ENCODE measurements at regions of chr5 and their contacts with region 1.

Region 1: DNA sequence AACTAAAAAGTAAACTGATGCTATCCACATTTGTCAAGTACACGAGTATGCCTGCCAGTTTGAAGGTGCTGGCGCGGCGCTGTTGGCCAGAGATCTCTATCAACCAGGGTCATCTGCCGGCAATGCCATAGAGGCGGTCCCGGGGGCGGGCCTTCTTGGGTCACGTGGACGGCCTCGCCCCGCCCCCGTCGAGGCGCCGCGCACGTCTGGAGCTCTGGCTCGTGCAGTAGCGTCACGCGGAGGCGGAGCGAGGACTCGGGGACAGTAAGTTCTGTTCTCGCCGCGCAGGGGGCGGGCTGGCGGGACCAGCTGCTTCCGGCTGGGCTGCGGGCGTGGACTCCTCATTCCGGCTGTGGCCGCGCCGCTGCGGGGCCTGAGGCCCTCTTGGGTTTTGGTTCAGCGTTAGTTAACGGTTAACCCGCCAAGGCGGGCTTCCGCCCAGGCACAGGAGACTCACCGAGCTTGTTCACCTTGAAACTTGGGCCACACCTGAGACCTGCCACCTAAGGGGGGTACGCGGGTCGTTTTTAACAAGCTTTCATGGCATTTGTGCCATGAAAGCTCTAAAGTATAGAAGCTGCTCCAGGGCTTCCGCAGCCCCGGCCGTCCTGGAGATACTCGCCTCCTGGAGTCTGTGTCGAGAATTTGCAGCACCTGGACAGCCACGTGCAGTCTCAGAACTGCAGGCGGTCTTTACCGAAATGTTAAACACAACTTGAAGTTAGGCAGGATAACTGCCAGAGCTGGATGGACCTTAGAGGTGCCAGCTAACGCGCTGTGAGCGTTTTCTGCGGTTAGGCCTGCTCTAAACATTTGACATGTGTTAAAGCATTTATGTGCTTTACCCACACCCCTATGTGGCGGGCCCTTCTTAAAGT is at the start of gene RFESD:
- DNase-seq: peak; percentile 58
- H3K4me3 ChIP-seq: peak within 1 kb of the TSS; percentile 63
- CTCF ChIP-seq: peak; percentile 18

Region 2: DNA sequence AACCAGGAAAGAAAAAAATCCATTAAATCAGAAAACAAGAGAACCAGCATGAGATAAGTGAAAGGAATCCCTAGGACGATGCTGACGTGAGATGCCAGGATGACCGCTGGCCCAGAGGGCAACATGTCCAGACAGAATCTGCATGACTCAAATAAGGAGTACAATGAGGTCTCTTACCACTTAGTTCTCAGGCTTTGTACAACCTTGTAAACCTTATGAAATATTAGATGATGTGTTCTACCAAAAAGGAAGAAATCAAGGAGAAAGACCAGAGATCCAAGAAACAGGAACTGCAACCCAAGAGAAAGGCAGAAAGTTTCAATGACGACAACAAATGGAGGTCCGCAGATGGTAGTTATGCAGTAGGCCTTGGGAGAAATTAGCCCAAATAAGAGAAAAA is 29.7 kb before region 1 on chr5:
- CTCF ChIA-PET with region 1: no interaction called
- POLR2A ChIA-PET with region 1: no interaction called
- DNase-seq: no peak
- H3K4me3 ChIP-seq: no peak overlapping the region
- CTCF ChIP-seq: no peak

Region 3: DNA sequence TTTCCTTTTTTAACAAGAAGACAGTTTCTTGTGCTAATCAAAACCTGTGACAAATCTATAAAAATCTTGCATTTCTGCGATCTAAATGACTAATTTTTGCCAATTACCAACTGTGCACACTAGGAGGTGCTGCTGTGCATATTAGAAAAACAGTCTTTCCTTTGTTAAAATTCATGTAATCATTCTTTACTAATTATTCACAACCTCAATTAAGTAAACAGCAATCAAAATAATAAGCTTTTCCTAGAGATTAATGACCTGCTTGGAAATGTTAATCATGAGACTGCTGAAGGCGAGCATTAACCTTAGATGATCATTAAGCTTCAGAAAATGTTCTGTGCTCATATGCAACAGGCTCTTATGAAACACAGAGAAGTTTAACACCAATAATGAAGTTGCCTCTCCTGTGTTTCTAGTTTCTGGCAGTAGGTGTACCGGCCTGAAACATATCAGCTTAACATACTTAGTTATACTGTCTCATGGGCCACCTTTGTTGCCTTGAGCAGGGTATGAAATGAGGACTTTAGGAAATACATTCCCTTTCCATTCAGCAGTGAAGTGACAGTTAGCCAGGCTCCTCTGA is 17.5 kb after region 1 on chr5:
- CTCF ChIA-PET with region 1: interaction called, 37 read pairs
- POLR2A ChIA-PET with region 1: no interaction called
- DNase-seq: no peak
- H3K4me3 ChIP-seq: no peak overlapping the region
- CTCF ChIP-seq: peak; percentile 59

Region 4: GRCh38 chr5:95730730-95731570 is 84.2 kb after region 1 on chr5 and contains the start of gene RHOBTB3:
- CTCF ChIA-PET with region 1: interaction called, 8 read pairs
- POLR2A ChIA-PET with region 1: interaction called, 17 read pairs
- DNase-seq: peak; percentile 60
- H3K4me3 ChIP-seq: peak within 1 kb of the TSS; percentile 81
- CTCF ChIP-seq: peak; percentile 8

Region 5: DNA sequence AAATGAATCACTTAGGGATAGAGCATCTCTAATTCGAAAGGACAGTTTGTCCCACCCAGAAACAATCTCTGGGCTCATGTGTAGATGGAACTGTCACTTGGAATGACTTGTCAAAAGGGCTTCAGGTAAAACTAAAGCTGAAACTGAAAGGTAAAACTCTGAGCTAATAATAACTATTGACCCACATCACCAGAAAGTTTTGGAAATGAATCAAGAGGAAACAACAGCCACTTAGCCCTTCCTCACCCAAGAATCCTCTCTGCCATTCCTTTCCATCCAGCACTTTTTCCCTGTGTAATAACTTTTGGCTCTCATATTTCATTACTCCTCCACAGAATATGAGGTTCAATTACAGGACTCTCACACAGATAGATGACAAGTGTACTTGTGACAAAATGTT is 189.8 kb after region 1 on chr5:
- CTCF ChIA-PET with region 1: interaction called, 21 read pairs
- POLR2A ChIA-PET with region 1: no interaction called
- DNase-seq: no peak
- H3K4me3 ChIP-seq: no peak overlapping the region
- CTCF ChIP-seq: no peak

Region 6: DNA sequence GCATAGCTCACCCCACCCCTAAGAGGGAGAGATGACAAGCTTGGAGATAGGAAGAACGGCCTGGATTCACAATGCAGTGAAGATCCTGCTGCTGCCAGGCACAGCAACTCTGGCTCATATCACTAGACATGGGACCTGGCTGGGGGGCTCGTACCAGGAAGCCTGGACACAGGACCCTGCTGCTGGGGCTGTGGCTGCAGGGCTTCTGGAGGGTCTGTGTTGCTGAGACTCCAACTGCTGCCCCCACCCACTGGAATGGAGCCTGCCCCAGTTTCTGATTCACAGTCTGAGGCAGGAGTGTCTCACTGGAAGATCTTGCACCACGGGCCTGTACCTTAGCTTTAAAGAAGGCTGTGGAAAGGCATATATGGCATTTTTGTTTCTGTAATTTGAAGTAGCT is 206.7 kb after region 1 on chr5:
- CTCF ChIA-PET with region 1: interaction called, 222 read pairs
- POLR2A ChIA-PET with region 1: interaction called, 5 read pairs
- DNase-seq: no peak
- H3K4me3 ChIP-seq: no peak overlapping the region
- CTCF ChIP-seq: no peak

Region 7: DNA sequence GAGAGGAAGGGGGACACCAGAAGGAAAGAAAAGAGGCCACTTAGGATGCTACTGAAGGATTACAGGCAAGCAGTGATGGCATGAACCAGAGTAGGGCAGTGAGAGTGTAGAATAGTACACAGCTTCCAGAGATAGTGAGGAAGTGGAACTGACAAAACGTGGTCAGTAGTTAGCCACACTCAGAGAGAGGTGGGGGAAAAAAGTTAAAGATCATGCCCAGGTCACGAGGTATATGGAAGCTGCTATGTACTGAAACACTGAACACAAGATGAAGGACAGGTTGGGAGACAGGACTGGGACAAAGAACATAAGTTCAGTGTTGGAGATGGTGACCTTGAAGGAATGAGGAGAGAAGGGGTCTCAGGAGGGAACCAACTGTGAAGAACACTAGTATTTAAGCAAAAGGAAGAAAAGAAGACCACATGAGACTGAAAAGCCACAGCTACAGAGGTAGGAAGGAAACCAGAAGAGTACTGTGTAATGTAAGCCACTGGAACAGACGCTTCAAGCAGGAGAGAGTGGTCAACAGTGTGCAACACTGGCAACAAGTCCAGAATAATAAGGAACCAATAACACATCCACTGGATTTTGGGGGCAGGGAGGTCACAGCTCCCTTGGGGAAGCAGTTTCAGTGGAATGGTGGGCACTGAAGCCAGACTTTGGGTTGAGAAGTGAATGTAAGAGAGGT is 269.4 kb after region 1 on chr5:
- CTCF ChIA-PET with region 1: no interaction called
- POLR2A ChIA-PET with region 1: no interaction called
- DNase-seq: no peak
- H3K4me3 ChIP-seq: no peak overlapping the region
- CTCF ChIP-seq: no peak